Left cardiac atrium (tissue), 4 donors: ENCODE measurements at regions of chr16 and their contacts with region 1.

Region 1: DNA sequence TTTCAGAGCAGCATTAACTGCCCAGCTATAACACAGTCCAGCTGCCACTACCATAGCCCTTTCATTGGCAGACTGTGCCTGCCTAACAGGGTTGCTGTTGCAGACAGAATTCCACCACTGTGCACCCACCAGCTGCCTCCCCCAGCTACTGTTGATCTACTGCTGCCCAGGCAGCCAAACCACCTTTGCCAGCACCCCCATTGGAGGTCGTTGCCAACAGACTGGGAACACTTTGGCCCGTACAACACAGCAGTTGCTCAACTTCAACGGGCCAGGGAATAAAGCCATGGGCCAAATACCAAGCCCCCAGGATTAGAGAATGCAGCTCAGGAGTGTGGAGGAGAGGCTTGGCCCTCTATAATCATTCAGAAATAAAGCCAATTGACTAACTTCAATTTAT is 473.6 kb downstream of the CDH11 start:
- DNase-seq: no peak
- ATAC-seq: no peak

Region 2: DNA sequence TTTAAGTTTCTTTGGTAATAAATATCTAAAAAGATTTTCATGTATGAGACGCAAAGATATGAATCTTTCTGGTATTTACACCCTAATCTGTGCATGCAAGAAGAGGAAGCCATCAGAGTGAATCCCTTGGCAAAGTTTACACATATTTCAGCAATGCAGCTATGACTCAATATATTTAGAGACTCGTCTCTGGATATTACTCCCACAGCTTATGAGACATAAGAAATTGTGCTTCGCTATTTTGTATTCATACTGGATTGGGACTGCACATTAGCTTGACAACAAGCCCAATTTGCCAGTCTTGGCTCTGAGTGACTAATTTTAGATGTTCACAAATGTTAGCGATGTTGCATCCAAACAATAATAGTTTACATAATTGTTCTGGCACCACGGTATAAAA is 58.4 kb before region 1 on chr16:
- intact Hi-C with region 1: loop called in 1 of 2 experiments (anchors 10 kb)
- DNase-seq: no peak
- ATAC-seq: peak in 1 of 2 donors; percentile 79

Region 3: GRCh38 chr16:65249768-65250167 is 601.5 kb after region 1 on chr16:
- intact Hi-C with region 1: no loop called
- DNase-seq: peak; percentile 87
- ATAC-seq: peak; percentile 96 to 98